Activated CD4-positive, alpha-beta memory T cell treated with anti-CD3 and anti-CD28 coated beads for 36 hours (primary cell): ENCODE measurements at regions of chr20 and their contacts with region 1.

Region 1: DNA sequence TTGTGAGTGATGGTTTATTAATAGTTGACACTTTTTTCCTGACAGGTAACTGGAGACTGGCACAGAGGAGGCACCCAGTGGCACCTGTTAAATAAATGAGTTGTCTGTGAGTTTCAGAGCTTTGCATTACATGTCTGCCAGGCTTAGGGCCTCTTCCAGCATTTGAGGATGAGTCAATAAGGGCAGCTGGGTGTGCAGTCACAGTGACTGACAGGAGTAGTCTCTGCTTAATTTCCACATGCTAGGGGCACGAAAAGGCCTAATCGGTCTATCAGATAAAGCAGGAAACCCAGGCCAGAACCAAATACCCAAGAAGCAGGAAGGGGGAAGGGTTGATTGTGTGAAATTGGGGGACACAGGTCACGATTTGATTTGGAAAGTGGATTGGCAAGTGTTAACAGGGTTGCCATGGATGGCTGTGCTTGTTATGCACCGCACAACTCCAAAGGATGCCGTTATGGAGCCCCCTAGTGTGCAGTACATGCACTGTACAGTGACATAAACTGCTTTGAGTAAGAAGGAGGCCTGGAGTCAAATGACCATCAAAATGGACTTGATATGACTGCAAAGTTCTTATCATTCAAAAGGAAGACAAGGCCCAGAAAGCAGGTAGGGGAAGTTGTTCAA is 111.9 kb upstream of the GGTLC1 start:
- DNase-seq: peak; percentile 69
- H3K4me3 Mint-ChIP-seq: no peak overlapping the region
- H3K27ac Mint-ChIP-seq: no peak overlapping the region
- H3K4me1 Mint-ChIP-seq: peaks cover 20% of the 10 kb centered on the region
- H3K27me3 Mint-ChIP-seq: peaks cover 11% of the 10 kb centered on the region

Region 2: DNA sequence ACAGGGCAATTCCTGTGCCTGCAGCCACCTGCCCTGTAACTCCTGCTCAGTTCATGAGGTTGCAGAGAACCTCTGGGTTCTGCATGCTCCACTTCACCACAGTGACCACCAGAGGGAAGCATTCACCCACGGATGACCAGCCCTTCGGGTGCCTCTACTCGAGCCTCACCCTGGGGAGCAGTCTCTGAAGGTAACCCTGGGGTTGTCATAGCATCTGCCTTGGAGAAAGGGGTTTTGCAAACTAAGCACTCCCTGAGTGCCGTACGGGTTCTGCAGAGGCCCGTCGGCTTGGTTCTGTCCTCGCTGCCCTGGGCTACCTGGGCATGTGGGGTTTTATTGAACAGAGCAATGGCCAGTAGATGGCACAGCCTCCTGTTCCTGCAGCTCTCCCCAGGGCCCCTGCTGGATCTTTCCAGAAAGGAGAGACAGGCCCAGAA is 210.7 kb before region 1 on chr20:
- CTCF ChIA-PET with region 1: no interaction called
- POLR2A ChIA-PET with region 1: no interaction called
- intact Hi-C with region 1: loop called (anchors 5 kb)
- DNase-seq: peak; percentile 71
- H3K4me3 Mint-ChIP-seq: no peak overlapping the region
- H3K27ac Mint-ChIP-seq: no peak overlapping the region
- H3K4me1 Mint-ChIP-seq: no peaks in the 10 kb centered on the region
- H3K27me3 Mint-ChIP-seq: peaks cover 3% of the 10 kb centered on the region

Region 3: DNA sequence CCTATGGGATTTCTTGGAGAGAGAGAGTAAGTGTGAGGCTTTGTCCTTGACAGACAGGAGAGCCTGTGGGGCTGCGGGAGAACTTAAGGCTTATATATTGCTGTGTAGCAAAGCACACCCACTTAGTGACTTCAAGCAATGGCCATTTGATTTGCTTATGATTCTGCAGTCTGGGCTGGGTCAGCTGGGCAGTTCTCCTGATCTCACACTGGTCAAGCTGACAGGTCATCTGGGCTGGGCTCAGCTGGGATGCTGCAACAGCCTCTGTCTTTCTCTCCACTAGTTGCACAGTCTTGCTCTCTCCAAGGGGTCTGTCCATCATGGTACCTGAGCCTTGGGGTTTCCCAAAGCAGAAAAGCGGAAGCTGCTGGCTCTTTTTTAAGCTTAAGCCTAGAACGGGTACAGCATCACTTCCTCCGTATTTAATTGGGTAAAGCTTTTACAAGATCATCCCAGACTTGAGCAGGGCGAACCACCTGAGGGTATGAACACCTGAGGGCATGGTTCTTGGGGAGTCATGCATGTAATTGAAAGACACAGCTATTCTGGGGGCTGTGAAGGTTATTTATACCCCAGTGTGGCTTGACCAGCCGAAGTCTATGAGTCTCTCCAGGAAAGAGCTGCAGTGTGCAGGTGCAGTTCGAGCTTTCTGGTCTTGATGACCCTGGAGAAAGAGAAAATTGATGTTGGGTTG is 98.6 kb before region 1 on chr20:
- CTCF ChIA-PET with region 1: interaction called, 3 read pairs
- POLR2A ChIA-PET with region 1: no interaction called
- intact Hi-C with region 1: loop called (anchors 5 kb)
- DNase-seq: no peak
- H3K4me3 Mint-ChIP-seq: no peak overlapping the region
- H3K27ac Mint-ChIP-seq: no peak overlapping the region
- H3K4me1 Mint-ChIP-seq: no peaks in the 10 kb centered on the region
- H3K27me3 Mint-ChIP-seq: no peaks in the 10 kb centered on the region

Region 4: GRCh38 chr20:24045621-24046318 is 54.7 kb before region 1 on chr20:
- CTCF ChIA-PET with region 1: interaction called, 4 read pairs
- POLR2A ChIA-PET with region 1: interaction called, 3 read pairs
- intact Hi-C with region 1: loop called (anchors 1 kb)
- DNase-seq: peak; percentile 62
- H3K4me3 Mint-ChIP-seq: no peak overlapping the region
- H3K27ac Mint-ChIP-seq: no peak overlapping the region
- H3K4me1 Mint-ChIP-seq: peaks cover 43% of the 10 kb centered on the region
- H3K27me3 Mint-ChIP-seq: no peaks in the 10 kb centered on the region

Region 5: GRCh38 chr20:24134284-24134683 is 33.8 kb after region 1 on chr20:
- CTCF ChIA-PET with region 1: no interaction called
- POLR2A ChIA-PET with region 1: no interaction called
- intact Hi-C with region 1: no loop called
- DNase-seq: no peak
- H3K4me3 Mint-ChIP-seq: no peak overlapping the region
- H3K27ac Mint-ChIP-seq: no peak overlapping the region
- H3K4me1 Mint-ChIP-seq: peaks cover 4% of the 10 kb centered on the region
- H3K27me3 Mint-ChIP-seq: no peaks in the 10 kb centered on the region

Region 6: DNA sequence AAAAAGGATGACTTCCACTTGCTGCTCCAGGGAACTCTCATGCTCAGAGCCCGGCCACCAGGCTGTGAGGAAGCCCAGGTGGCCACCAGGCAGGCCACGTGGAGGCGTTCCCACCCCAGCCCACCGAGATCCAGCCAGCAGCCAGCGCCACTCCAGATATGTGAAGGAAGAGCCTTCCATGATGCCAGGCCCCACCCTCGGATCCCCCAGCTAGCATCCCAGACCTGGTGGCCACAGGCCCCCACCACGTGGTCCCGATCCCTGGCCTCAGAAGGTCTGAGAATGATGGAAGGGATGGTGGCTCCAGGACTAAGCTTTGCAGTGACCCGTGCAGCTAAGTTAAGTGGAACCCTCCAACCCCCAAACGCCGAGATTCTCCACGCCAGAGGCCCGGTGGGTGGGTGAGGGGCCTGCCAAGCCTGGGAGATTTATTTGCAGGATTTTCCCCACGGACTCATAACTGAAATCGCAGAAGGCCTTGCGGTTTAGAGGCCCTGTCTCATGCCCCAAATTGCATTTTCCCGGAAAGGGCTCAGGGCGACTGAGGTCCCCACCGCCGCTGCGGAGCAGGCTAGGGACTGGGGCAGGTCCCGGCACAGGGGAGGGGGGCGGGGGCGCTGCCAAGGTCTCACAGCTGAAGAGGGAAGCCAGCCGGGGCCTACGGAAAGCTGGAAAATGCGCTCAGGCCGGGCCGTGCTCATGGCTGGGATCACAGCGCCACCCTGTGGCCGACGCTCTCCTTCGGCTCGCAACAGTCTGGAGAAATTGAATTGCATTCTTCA is 817.5 kb after region 1 on chr20:
- CTCF ChIA-PET with region 1: interaction called, 4 read pairs
- POLR2A ChIA-PET with region 1: no interaction called
- intact Hi-C with region 1: loop called (anchors 5 kb)
- DNase-seq: peak; percentile 65
- H3K4me3 Mint-ChIP-seq: no peak overlapping the region
- H3K27ac Mint-ChIP-seq: no peak overlapping the region
- H3K4me1 Mint-ChIP-seq: peaks cover 7% of the 10 kb centered on the region
- H3K27me3 Mint-ChIP-seq: peaks cover 4% of the 10 kb centered on the region